ENCODE measurements at regions of chr1 and their contacts with region 1.

Region 1: DNA sequence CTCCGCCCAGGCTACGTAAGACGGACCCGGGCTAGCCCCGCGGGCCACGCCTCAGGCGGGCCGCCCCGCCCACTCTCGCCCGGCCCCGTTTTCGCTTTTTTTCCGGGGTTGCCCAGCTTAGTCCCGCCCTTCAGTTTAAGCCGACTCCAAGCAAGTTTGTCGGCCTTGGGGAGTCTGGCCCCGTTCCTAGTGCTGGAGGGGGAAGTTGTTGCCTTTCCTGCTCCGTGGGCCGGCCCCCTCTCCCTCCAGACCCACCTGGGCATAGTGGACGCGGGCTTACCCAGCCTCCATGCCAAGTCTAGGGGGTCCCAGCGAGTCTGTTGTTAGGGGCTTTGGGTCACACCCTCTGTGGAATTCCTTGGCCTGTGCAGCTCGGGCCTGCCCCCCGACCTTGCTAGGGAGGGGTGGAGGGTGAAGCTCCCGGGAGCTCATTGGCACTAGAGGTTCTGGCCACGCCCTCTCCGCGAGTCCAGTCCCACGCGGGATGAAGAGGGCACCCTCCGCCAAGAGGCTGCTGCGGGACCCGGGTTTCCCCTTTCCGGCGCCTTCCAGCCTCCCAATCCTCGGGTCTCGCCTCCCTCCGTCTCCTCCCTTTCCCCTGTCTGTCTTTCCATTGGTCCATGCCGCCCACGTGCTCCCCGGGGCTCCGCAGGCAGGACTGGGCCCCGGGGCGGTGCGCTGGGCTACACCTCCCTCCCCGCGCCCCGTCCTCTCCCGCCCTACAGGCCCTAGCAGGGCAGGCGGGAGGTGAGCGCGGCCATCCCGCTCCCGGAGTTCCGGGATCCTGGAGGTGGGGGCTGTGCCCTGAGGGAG is 3.3 kb downstream of the RUSC1 start:
- DNase-seq: peak; percentile 98
- H3K4me3 Mint-ChIP-seq: peak overlapping the region; percentile 91
- H3K27ac Mint-ChIP-seq: peak overlapping the region; percentile 86
- H3K4me1 Mint-ChIP-seq: peaks cover 36% of the 10 kb centered on the region
- H3K27me3 Mint-ChIP-seq: no peaks in the 10 kb centered on the region

Region 2: GRCh38 chr1:155172732-155173477 is 151.1 kb before region 1 on chr1 and contains the start of gene KRTCAP2:
- intact Hi-C with region 1: loop called (anchors 5 kb)
- DNase-seq: peak; percentile 98
- H3K4me3 Mint-ChIP-seq: peak within 1 kb of the TSS; percentile 99
- H3K27ac Mint-ChIP-seq: peak within 1 kb of the TSS; percentile 99
- H3K4me1 Mint-ChIP-seq: peaks cover 51% of the 10 kb centered on the region
- H3K27me3 Mint-ChIP-seq: peaks cover 6% of the 10 kb centered on the region
- total RNA-seq, gene KRTCAP2: 244 and 245 TPM in 2 replicates

Region 3: DNA sequence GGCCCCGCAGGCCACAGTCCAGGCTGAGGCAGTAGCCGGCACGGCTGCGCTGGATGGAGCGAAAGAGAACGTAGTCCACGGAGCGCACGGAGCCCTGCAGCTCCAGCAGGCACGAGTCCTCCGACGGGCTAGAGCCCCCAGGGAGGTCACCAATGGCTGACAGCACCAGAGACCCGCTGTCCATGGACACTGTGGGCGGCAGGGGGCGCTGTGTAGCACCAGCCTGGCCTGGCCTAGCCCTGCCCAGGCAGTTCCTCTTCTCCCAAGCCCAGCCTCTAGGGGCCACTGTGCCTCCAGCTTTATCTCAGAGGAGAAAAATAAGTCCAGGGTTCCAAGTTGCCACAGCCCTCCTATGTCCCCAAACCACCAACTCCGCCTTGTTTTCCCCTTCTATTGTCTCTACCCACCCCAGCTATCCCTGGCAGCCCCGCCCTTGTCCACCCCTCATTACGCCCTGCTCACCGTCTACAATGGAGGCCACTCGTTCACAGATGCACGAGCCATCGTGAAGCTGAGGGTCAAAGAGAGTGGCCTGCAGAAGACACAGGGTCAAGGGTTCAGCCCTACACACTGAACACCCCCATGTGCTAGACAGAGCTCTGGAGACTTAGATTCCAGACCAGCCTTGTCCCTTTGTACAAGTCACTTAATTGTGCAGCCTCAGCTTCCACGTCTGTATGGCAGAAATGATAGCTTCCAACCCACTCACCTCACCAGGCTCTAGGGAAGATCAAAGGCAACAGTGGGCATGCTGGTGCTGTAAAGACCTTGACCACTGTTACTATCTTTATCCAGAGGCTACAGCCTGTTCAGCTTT is 73.2 kb before region 1 on chr1:
- intact Hi-C with region 1: loop called (anchors 1 kb)
- DNase-seq: peak; percentile 99
- H3K4me3 Mint-ChIP-seq: peak overlapping the region; percentile 58
- H3K27ac Mint-ChIP-seq: no peak overlapping the region
- H3K4me1 Mint-ChIP-seq: peaks cover 32% of the 10 kb centered on the region
- H3K27me3 Mint-ChIP-seq: no peaks in the 10 kb centered on the region

Region 4: DNA sequence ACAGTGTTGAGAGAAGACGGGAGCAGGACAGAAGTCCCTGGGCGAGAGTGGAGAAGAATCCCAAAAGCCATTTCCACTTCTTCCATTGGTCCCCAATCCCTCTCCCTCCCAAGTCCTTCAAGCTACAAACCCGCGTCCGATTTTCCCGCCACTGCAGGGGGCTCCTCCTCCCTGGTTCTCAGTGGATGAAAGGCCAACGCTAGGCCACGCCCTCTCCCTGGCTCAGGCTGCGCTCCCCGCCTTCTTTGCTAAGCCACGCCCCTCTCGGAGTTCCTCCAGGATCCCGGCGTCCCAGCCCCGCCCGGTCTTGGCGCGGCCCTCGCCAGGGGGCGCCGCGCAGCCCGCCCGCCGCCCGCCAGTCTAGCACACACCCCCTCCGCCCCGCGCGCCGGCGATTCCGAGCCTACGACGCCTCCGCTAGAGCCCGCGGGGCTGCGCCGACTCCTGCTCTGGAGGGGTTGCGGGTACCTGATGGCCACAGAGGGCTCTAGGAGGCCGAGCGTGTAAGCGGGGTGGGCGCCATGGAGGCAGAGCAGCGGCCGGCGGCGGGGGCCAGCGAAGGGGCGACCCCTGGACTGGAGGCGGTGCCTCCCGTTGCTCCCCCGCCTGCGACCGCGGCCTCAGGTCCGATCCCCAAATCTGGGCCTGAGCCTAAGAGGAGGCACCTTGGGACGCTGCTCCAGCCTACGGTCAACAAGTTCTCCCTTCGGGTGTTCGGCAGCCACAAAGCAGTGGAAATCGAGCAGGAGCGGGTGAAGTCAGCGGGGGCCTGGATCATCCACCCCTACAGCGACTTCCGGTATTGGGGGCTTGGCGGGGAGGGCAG is 46.7 kb before region 1 on chr1 and contains the start of gene HCN3:
- intact Hi-C with region 1: loop called (anchors 1 kb)
- DNase-seq: peak; percentile 98
- H3K4me3 Mint-ChIP-seq: peak within 1 kb of the TSS; percentile 75
- H3K27ac Mint-ChIP-seq: peak within 1 kb of the TSS; percentile 34
- H3K4me1 Mint-ChIP-seq: peaks cover 25% of the 10 kb centered on the region
- H3K27me3 Mint-ChIP-seq: no peaks in the 10 kb centered on the region
- total RNA-seq, gene HCN3: 3.2 and 3.8 TPM in 2 replicates

Region 5: GRCh38 chr1:155287987-155288543 is 35.9 kb before region 1 on chr1:
- intact Hi-C with region 1: no loop called
- DNase-seq: no peak
- H3K4me3 Mint-ChIP-seq: no peak overlapping the region
- H3K27ac Mint-ChIP-seq: no peak overlapping the region
- H3K4me1 Mint-ChIP-seq: no peaks in the 10 kb centered on the region
- H3K27me3 Mint-ChIP-seq: peaks cover 13% of the 10 kb centered on the region

Region 6: GRCh38 chr1:155591770-155592169 is 267.8 kb after region 1 on chr1:
- intact Hi-C with region 1: loop called (anchors 10 kb)
- DNase-seq: peak; percentile 83
- H3K4me3 Mint-ChIP-seq: no peak overlapping the region
- H3K27ac Mint-ChIP-seq: no peak overlapping the region
- H3K4me1 Mint-ChIP-seq: no peaks in the 10 kb centered on the region
- H3K27me3 Mint-ChIP-seq: no peaks in the 10 kb centered on the region

Region 7: GRCh38 chr1:155744711-155745283 is 420.8 kb after region 1 on chr1:
- intact Hi-C with region 1: loop called (anchors 5 kb)
- DNase-seq: no peak
- H3K4me3 Mint-ChIP-seq: peak overlapping the region; percentile 93
- H3K27ac Mint-ChIP-seq: peak overlapping the region; percentile 92
- H3K4me1 Mint-ChIP-seq: peaks cover 9% of the 10 kb centered on the region
- H3K27me3 Mint-ChIP-seq: no peaks in the 10 kb centered on the region

Measured in activated CD4-positive, alpha-beta T cell treated with anti-CD3 and anti-CD28 coated beads, Interleukin-2, amount 10 ng/mL, durations not matched to agents 24 days and 14 days (primary cell).